ENCODE measurements at regions of chr7 and their contacts with region 1.

Region 1: DNA sequence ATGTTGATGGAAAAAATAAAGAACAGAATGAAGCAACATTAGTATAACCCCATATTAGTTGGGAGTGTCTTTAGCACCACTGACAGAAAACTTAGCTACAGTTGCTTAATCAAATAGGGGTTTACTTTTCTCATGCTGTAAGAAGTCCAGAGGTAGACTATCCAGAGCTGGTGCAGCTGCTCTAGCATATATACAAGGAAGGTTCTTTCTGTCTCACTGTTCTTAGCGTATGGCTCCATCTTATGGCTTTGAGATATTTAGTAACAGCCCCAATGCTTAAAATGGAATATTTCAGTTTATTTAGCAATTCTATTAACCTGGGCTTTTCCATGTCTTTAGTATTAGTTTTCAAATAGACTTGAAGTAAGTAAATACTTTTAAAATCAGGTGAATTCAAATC is 15.2 kb upstream of the WNT2 start:
- DNase-seq: no peak
- H3K4me3 ChIP-seq: no peak overlapping the region
- H3K27ac ChIP-seq: no peak overlapping the region
- H3K4me1 ChIP-seq: no peaks in the 10 kb centered on the region
- H3K27me3 ChIP-seq: no peaks in the 10 kb centered on the region
- CTCF ChIP-seq: no peak

Region 2: DNA sequence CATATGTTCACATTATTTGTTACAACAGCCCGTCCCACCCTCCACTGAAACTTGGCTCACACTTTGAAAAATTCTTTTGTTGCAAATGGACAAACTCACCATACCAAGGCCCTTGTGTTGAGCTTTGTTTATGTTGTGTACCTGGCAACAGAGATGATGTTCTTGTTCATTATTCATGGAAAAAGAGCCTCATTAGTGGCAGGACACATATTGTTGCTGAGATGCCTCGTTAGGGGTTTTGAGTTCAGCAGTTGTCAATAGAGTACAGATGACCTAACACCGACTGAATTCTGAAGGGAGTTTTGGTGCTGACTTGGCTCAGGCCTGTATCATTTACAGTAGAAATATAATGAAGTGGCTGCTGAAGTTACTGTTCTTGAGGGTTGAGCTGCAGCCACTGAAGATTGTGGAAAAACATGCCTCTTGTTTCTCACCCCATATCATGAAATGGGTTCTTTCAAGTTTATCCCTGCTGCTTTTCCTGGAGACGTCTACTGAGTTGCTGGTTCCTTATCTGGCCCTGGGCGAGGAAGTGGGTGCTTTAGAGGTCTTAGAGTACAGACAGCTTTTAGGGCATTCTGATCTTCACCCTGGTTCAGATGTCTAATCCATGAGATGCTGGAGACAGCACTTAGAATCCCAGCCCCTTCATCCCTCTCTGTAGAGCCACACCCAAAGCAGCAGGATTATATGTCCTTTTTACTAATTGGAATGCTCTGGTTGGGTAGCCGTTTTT is 164.8 kb before region 1 on chr7:
- intact Hi-C with region 1: no loop called
- DNase-seq: no peak
- H3K4me3 ChIP-seq: no peak overlapping the region
- H3K27ac ChIP-seq: no peak overlapping the region
- H3K4me1 ChIP-seq: peaks cover 0 to 16% of the 10 kb centered on the region in 2 donors
- H3K27me3 ChIP-seq: no peaks in the 10 kb centered on the region
- CTCF ChIP-seq: no peak

Region 3: DNA sequence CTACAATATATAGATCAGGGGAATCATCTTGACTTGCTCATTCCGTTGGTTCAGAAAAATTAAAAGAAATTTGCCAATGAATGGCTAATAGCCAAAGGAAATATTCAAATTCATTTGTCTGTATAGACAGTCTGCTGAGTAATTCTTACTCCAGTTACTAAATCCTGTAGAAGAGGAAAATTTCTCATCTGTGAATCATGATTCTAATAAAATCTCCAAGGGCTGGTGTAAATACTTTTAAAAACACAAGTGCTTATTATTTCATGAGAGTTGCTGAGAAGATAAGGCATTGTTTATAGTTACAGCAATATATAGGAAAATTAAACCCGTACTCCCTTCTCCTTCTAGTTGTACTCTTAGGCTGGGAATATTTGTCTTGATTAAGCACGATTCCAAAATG is 68.1 kb before region 1 on chr7:
- intact Hi-C with region 1: loop called (anchors 10 kb)
- DNase-seq: no peak
- H3K4me3 ChIP-seq: peak overlapping the region in 1 of 2 donors; percentile 10
- H3K27ac ChIP-seq: peak overlapping the region in 1 of 2 donors; percentile 11
- H3K4me1 ChIP-seq: peaks cover 0 to 5% of the 10 kb centered on the region in 2 donors
- H3K27me3 ChIP-seq: no peaks in the 10 kb centered on the region
- CTCF ChIP-seq: no peak

Measured in ascending aorta (tissue), 2 donors.